ENCODE measurements at regions of chr20 and their contacts with region 1.

Region 1: GRCh38 chr20:58179432-58180099 is 48.9 kb downstream of the ANKRD60 start:
- DNase-seq: peak; percentile 46
- H3K4me3 ChIP-seq: peak overlapping the region; percentile 17 to 38
- H3K27ac ChIP-seq: peak overlapping the region; percentile 52 to 53
- H3K4me1 ChIP-seq: no peaks in the 10 kb centered on the region
- H3K27me3 ChIP-seq: no peaks in the 10 kb centered on the region
- CTCF ChIP-seq: peak; percentile 97 to 99 (median 98)
- POLR2A ChIP-seq: no peak

Region 2: GRCh38 chr20:58028123-58028522 is 151.4 kb before region 1 on chr20:
- intact Hi-C with region 1: no loop called
- DNase-seq: no peak
- H3K4me3 ChIP-seq: no peak overlapping the region
- H3K27ac ChIP-seq: no peak overlapping the region
- H3K4me1 ChIP-seq: no peaks in the 10 kb centered on the region
- H3K27me3 ChIP-seq: no peaks in the 10 kb centered on the region
- CTCF ChIP-seq: peak in 1 of 4 experiments; percentile 5
- POLR2A ChIP-seq: no peak

Region 3: GRCh38 chr20:58087193-58087858 is 92.2 kb before region 1 on chr20:
- intact Hi-C with region 1: loop called (anchors 5 kb)
- DNase-seq: peak; percentile 41
- H3K4me3 ChIP-seq: no peak overlapping the region
- H3K27ac ChIP-seq: peak overlapping the region; percentile 15 to 22
- H3K4me1 ChIP-seq: no peaks in the 10 kb centered on the region
- H3K27me3 ChIP-seq: no peaks in the 10 kb centered on the region
- CTCF ChIP-seq: peak; percentile 76 to 92 (median 80)
- POLR2A ChIP-seq: no peak

Region 4: GRCh38 chr20:58131551-58132142 is 47.9 kb before region 1 on chr20:
- intact Hi-C with region 1: loop called (anchors 5 kb)
- DNase-seq: no peak
- H3K4me3 ChIP-seq: no peak overlapping the region
- H3K27ac ChIP-seq: peak overlapping the region; percentile 65 to 68
- H3K4me1 ChIP-seq: peaks cover 3% of the 10 kb centered on the region
- H3K27me3 ChIP-seq: no peaks in the 10 kb centered on the region
- CTCF ChIP-seq: no peak
- POLR2A ChIP-seq: no peak

Measured in prostate gland (tissue), 2 donors.